ENCODE measurements at regions of chr12 and their contacts with region 1.

Region 1: DNA sequence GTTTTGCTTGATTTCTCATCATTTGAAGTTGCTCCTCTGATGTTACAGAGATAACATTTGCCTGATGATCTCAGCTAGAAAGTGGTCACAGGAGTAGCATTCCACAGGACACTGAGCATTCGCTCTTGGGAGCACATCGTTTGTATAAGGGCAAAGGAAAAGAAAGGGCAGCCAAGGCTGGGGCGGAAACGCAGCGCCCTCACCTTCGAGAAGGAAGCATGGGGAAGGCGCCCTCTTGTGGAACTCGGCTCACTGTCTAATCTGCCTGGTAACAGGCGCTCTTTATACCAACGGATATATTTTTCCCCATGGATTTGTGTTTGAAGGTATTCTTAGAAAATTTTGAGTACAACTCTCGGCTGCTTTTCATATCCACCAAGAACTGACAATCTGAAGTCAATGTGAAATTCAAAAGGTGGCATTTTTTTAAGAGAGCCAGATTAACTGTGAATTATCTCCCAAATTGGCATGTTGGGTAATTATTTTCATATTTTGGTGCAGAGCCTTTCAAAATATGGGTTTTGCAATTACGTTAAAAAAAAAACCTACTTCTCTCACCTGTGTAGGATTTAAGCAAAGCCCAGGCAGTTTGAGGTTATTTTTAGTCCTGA is 172.7 kb downstream of the CAND1 start:
- DNase-seq: peak; percentile 89
- ATAC-seq: peak; percentile 94
- H3K4me3 Mint-ChIP-seq: no peak overlapping the region
- H3K27ac Mint-ChIP-seq: no peak overlapping the region
- H3K4me1 Mint-ChIP-seq: peaks cover 13% of the 10 kb centered on the region
- H3K27me3 Mint-ChIP-seq: peaks cover 3% of the 10 kb centered on the region

Region 2: DNA sequence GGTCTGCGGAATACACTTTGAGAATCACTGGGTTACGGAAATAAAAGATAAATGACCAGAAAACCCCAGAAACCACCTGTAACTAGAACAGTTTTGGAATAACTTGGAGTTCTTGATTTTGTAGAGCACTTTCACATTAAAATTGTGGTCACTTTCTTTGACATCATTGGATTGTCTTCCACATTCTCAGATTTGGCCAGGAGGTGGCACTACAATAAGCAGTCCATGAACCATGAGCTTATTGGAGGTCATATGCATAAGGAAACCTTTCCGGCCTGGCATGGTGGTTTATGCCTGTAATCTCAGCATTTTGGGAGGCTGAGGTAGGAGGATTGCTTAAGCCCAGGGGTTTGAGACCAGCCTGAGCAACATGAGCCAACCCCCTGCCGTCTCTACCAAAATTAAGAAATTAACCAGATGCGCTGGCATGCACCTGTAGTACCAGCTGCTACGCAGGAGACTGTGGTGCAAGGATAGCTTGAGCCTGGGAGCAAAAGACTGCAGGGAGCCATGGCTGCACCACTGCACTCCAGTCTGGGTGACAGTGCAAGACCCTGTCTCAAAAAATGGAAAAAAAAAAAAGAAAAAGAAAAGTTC is 280.4 kb before region 1 on chr12:
- CTCF ChIA-PET with region 1: no interaction called
- POLR2A ChIA-PET with region 1: no interaction called
- intact Hi-C with region 1: loop called in 1 of 2 experiments (anchors 2 kb)
- DNase-seq: peak; percentile 64
- ATAC-seq: no peak
- H3K4me3 Mint-ChIP-seq: no peak overlapping the region
- H3K27ac Mint-ChIP-seq: no peak overlapping the region
- H3K4me1 Mint-ChIP-seq: no peaks in the 10 kb centered on the region
- H3K27me3 Mint-ChIP-seq: peaks cover 2% of the 10 kb centered on the region

Region 3: GRCh38 chr12:67355578-67356379 is 86.1 kb before region 1 on chr12:
- CTCF ChIA-PET with region 1: interaction called, 37 read pairs
- POLR2A ChIA-PET with region 1: no interaction called
- intact Hi-C with region 1: loop called (anchors 1 to 2 kb)
- DNase-seq: peak; percentile 22
- ATAC-seq: peak; percentile 65
- H3K4me3 Mint-ChIP-seq: no peak overlapping the region
- H3K27ac Mint-ChIP-seq: no peak overlapping the region
- H3K4me1 Mint-ChIP-seq: peaks cover 29% of the 10 kb centered on the region
- H3K27me3 Mint-ChIP-seq: no peaks in the 10 kb centered on the region

Region 4: GRCh38 chr12:67394550-67394949 is 47.3 kb before region 1 on chr12:
- CTCF ChIA-PET with region 1: no interaction called
- POLR2A ChIA-PET with region 1: no interaction called
- intact Hi-C with region 1: no loop called
- DNase-seq: no peak
- ATAC-seq: no peak
- H3K4me3 Mint-ChIP-seq: no peak overlapping the region
- H3K27ac Mint-ChIP-seq: no peak overlapping the region
- H3K4me1 Mint-ChIP-seq: no peaks in the 10 kb centered on the region
- H3K27me3 Mint-ChIP-seq: no peaks in the 10 kb centered on the region

Region 5: GRCh38 chr12:67410246-67410645 is 31.6 kb before region 1 on chr12:
- CTCF ChIA-PET with region 1: no interaction called
- POLR2A ChIA-PET with region 1: no interaction called
- intact Hi-C with region 1: no loop called
- DNase-seq: no peak
- ATAC-seq: no peak
- H3K4me3 Mint-ChIP-seq: no peak overlapping the region
- H3K27ac Mint-ChIP-seq: no peak overlapping the region
- H3K4me1 Mint-ChIP-seq: no peaks in the 10 kb centered on the region
- H3K27me3 Mint-ChIP-seq: no peaks in the 10 kb centered on the region

Region 6: DNA sequence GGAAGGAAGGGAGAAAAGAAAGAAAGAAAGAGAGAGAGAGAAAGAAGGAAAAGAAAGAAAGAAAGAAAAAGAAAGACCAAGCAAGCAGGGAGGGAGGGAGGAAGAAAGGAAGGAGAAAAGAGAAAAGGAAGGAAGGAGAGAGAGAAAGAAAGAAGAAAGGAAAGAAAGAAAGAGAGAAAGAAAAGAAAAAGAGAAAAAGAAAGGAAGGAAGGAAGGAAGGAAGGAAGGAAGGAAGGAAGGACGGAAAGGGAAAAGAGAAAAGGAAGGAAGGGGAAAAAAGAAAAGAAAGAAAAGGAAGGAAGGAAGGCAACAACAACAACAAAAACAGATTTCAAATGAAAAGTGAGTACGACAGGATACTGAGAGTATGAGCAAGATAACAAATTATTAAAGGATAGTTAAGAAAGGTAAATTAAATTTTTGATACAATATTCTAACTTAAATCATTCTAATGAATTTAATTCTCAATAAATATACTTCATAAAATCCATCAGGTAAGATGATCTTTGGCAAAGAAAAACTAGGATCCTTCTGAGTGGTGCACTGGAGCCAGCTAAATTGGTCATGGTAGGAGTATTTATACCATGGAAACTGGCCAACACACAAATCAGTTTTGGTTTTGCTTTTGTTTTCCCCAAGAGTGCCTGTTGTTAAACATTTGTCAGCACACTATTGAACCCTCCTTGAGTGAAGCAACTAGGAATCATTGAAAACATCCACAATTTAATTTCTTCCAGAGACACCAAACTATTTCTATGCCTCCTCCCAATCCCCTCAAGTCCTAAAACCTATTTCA is 150.6 kb after region 1 on chr12:
- CTCF ChIA-PET with region 1: no interaction called
- POLR2A ChIA-PET with region 1: no interaction called
- intact Hi-C with region 1: no loop called
- DNase-seq: peak; percentile 7
- ATAC-seq: peak; percentile 64
- H3K4me3 Mint-ChIP-seq: no peak overlapping the region
- H3K27ac Mint-ChIP-seq: peak overlapping the region; percentile 66
- H3K4me1 Mint-ChIP-seq: peaks cover 47% of the 10 kb centered on the region
- H3K27me3 Mint-ChIP-seq: no peaks in the 10 kb centered on the region

Region 7: DNA sequence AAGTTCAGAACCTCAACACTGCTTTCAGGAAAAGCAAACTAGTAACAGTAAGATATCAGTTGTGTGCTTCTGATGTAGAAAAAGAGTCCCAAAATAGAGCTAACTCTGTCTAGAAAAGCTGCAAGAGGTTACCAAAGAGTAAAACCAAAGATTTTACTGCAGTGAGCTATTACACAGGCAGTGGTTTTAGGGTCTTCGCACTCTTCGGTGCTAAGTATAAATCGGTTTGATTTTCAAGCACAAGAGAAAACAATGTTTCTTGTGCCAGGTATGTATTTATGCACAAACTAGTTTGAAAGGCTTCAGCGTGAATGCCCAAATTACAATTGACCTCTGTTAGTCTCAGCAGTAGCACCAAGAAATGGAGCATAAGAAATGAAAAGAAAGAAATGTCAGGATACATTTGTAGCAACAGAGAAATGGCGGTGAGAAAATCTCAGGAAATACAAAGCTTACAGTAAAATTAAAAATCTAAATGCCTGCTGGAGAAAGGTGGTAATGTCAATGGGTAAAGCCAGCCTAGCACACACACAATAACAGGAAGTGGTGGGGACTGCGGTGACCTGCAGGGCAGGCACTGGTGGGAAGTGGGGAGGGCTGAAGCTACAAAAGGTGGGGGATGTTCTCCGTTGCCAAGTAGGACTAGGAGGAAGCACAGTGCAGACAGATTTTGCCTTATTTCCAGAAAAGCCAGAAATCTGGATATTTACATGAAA is 188.7 kb after region 1 on chr12:
- CTCF ChIA-PET with region 1: no interaction called
- POLR2A ChIA-PET with region 1: no interaction called
- intact Hi-C with region 1: loop called in 1 of 2 experiments (anchors 5 kb)
- DNase-seq: peak; percentile 90
- ATAC-seq: peak; percentile 93
- H3K4me3 Mint-ChIP-seq: peak overlapping the region; percentile 56
- H3K27ac Mint-ChIP-seq: peak overlapping the region; percentile 90
- H3K4me1 Mint-ChIP-seq: peaks cover 72% of the 10 kb centered on the region
- H3K27me3 Mint-ChIP-seq: no peaks in the 10 kb centered on the region

Region 8: DNA sequence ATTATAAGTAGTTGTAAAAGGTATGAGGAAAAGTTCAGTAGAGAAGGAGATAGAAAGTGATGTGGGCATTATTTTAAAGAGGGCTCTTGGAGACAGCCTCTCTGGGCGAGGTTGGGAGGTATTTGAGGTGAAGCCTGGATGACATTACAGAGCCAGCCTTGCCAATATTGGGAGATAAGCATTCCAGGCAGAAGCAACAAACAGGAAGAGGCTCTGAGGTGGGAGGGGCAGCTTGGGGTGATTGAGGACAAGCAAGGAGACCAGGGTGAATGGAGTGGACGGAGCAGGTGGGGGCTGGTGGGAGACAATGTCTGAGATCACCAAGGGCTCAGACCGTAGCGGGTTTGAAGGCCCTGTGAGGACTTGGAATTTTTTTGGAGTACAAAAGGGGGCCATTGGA is 294.0 kb after region 1 on chr12:
- CTCF ChIA-PET with region 1: no interaction called
- POLR2A ChIA-PET with region 1: no interaction called
- intact Hi-C with region 1: no loop called
- DNase-seq: no peak
- ATAC-seq: no peak
- H3K4me3 Mint-ChIP-seq: no peak overlapping the region
- H3K27ac Mint-ChIP-seq: no peak overlapping the region
- H3K4me1 Mint-ChIP-seq: no peaks in the 10 kb centered on the region
- H3K27me3 Mint-ChIP-seq: peaks cover 2% of the 10 kb centered on the region

Region 9: DNA sequence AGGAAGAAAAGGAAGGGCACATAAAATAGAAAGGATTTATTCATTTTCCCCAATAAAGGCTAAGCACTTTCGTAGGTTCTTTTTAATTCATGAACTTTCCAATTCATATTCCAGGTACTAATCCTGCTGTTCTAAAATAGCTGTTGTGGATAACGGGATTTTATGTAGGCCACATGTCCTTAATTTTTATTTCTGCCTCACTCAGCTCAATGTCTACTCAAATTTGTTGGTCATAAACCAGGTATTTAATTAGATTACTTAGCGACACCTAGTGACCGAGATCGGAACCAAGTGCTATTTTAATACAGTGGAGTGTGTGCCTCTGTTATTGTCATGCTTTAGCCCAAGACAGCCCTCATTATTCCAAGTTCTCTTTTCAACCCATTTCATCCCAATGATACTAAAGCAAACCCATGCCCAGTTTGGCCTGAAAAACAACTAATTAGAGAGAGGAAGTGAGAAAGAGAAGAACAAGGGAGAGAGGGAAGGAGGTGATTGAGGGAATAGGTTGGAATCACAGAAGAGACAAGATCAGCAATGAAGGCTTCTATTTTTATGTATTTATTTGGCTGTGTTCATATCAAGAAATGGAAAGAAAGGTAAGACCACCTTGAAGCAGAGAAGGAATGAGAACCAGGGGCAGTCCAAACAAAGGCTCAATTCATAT is 501.5 kb after region 1 on chr12:
- CTCF ChIA-PET with region 1: interaction called, 6 read pairs
- POLR2A ChIA-PET with region 1: no interaction called
- intact Hi-C with region 1: loop called (anchors 2 to 5 kb)
- DNase-seq: peak; percentile 75
- ATAC-seq: peak; percentile 70
- H3K4me3 Mint-ChIP-seq: no peak overlapping the region
- H3K27ac Mint-ChIP-seq: no peak overlapping the region
- H3K4me1 Mint-ChIP-seq: peaks cover 4% of the 10 kb centered on the region
- H3K27me3 Mint-ChIP-seq: peaks cover 2% of the 10 kb centered on the region

Measured in activated CD4-positive, alpha-beta T cell treated with anti-CD3 and anti-CD28 coated beads for 36 hours (primary cell).